Activated CD4-positive, alpha-beta T cell treated with anti-CD3 and anti-CD28 coated beads, Interleukin-2, amount 10 ng/mL, durations not matched to agents 7 days and 5 days (primary cell): ENCODE measurements at regions of chr11 and their contacts with region 1.

Region 1: GRCh38 chr11:125568970-125569914 is at the start of gene EI24:
- DNase-seq: peak; percentile 90
- H3K4me3 Mint-ChIP-seq: peak within 1 kb of the TSS; percentile 91
- H3K27ac Mint-ChIP-seq: peak within 1 kb of the TSS; percentile 93
- H3K4me1 Mint-ChIP-seq: peaks cover 26% of the 10 kb centered on the region
- H3K27me3 Mint-ChIP-seq: no peaks in the 10 kb centered on the region
- total RNA-seq, gene EI24: 37.3 to 44.3 TPM

Region 2: GRCh38 chr11:125494974-125495725 is 74.1 kb before region 1 on chr11:
- CTCF ChIA-PET with region 1: no interaction called
- POLR2A ChIA-PET with region 1: no interaction called
- DNase-seq: no peak
- H3K4me3 Mint-ChIP-seq: peak overlapping the region; percentile 67
- H3K27ac Mint-ChIP-seq: peak overlapping the region; percentile 22
- H3K4me1 Mint-ChIP-seq: peaks cover 18% of the 10 kb centered on the region
- H3K27me3 Mint-ChIP-seq: peaks cover 61% of the 10 kb centered on the region

Region 3: GRCh38 chr11:125535585-125535984 is 33.7 kb before region 1 on chr11:
- CTCF ChIA-PET with region 1: no interaction called
- POLR2A ChIA-PET with region 1: no interaction called
- DNase-seq: no peak
- H3K4me3 Mint-ChIP-seq: no peak overlapping the region
- H3K27ac Mint-ChIP-seq: no peak overlapping the region
- H3K4me1 Mint-ChIP-seq: no peaks in the 10 kb centered on the region
- H3K27me3 Mint-ChIP-seq: peaks cover 9% of the 10 kb centered on the region

Region 4: GRCh38 chr11:125583496-125583895 is 14.3 kb after region 1 on chr11:
- CTCF ChIA-PET with region 1: interaction called, 20 read pairs
- POLR2A ChIA-PET with region 1: no interaction called
- DNase-seq: no peak
- H3K4me3 Mint-ChIP-seq: no peak overlapping the region
- H3K27ac Mint-ChIP-seq: no peak overlapping the region
- H3K4me1 Mint-ChIP-seq: peaks cover 3% of the 10 kb centered on the region
- H3K27me3 Mint-ChIP-seq: no peaks in the 10 kb centered on the region

Region 5: DNA sequence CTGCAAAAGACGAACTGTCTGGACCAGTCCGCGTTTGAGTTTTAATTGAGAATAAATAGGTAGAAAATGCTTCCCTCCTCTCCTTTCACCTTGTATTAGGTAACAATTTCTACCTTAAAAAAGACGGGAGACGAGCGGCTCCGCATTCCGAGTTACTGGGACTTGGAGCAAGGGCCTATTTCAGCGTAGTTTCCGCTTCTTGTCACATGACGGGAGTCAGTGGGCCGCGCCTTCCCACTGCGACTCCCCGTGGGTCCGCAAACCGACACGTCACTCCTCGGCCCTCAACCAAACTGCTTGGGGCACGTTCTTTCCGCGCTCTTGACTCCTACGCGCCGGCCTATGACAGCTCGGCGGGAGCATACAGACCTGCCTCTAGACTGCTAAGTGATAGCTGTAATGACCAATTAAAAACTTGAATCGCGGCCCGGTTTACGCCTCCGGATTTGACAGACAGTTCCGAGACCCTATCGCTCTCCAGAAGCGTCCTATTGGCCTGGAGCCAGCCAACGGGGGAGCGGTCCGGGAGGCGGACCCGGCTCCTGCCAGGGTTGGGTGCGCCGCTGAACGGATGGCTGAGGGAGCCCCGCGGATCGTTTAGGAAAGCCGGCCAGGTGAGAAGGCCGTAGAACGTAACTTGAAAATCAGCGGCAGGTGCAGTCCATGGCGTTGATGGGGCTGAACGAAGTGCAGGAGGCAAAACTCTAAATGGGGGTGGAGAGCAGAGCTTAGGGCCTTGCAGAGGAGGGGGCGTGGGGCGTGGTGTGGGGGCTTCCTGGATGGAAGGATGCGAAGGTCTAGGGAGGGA is 23.3 kb after region 1 on chr11 and contains the start of gene STT3A:
- CTCF ChIA-PET with region 1: interaction called, 12 read pairs
- POLR2A ChIA-PET with region 1: no interaction called
- DNase-seq: peak; percentile 97
- H3K4me3 Mint-ChIP-seq: peak within 1 kb of the TSS; percentile 91
- H3K27ac Mint-ChIP-seq: peak within 1 kb of the TSS; percentile 95
- H3K4me1 Mint-ChIP-seq: peaks cover 41% of the 10 kb centered on the region
- H3K27me3 Mint-ChIP-seq: no peaks in the 10 kb centered on the region
- total RNA-seq, gene STT3A: 105 to 127 TPM

Region 6: DNA sequence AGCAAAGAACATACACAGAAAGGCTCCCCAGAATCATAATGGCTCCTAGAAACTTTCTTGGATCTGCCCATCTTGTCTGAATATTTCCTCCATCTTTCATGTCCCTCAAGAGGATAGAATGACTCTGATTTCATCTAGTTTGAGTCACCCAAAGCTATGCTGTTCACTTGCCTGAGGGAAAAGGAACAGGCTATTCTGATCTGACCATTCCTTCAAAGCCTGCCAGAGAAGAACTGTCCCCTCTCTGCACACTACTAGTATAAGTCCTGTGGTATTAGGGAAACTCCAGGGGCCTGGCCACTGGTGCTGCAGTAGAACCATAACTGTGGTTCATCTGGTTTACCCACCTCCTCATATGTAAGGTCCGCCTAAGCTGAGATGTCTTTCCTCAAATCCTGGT is 174.4 kb after region 1 on chr11:
- CTCF ChIA-PET with region 1: no interaction called
- POLR2A ChIA-PET with region 1: no interaction called
- DNase-seq: no peak
- H3K4me3 Mint-ChIP-seq: no peak overlapping the region
- H3K27ac Mint-ChIP-seq: no peak overlapping the region
- H3K4me1 Mint-ChIP-seq: no peaks in the 10 kb centered on the region
- H3K27me3 Mint-ChIP-seq: peaks cover 12% of the 10 kb centered on the region